ENCODE measurements at regions of chr4 and their contacts with region 1.

Region 1: GRCh38 chr4:17614416-17615299 is at the start of gene MED28:
- DNase-seq: peak; percentile 98
- ATAC-seq: peak; percentile 89
- H3K4me3 Mint-ChIP-seq: peak within 1 kb of the TSS; percentile 98
- H3K27ac Mint-ChIP-seq: peak within 1 kb of the TSS; percentile 97
- H3K4me1 Mint-ChIP-seq: peaks cover 45% of the 10 kb centered on the region
- H3K27me3 Mint-ChIP-seq: no peaks in the 10 kb centered on the region
- total RNA-seq, gene MED28: 43.0 to 58.0 TPM

Region 2: GRCh38 chr4:17511950-17512795 is 102.5 kb before region 1 on chr4 and contains the start of gene QDPR:
- CTCF ChIA-PET with region 1: interaction called, 3 read pairs
- POLR2A ChIA-PET with region 1: no interaction called
- intact Hi-C with region 1: loop called in 1 of 2 experiments (anchors 1 kb)
- DNase-seq: peak; percentile 88
- ATAC-seq: peak; percentile 95
- H3K4me3 Mint-ChIP-seq: peak within 1 kb of the TSS; percentile 78
- H3K27ac Mint-ChIP-seq: peak within 1 kb of the TSS; percentile 85
- H3K4me1 Mint-ChIP-seq: peaks cover 23% of the 10 kb centered on the region
- H3K27me3 Mint-ChIP-seq: no peaks in the 10 kb centered on the region
- total RNA-seq, gene QDPR: 34.5 to 34.6 TPM

Region 3: GRCh38 chr4:17544205-17544604 is 70.5 kb before region 1 on chr4:
- CTCF ChIA-PET with region 1: interaction called, 8 read pairs
- POLR2A ChIA-PET with region 1: no interaction called
- intact Hi-C with region 1: loop called (anchors 1 to 2 kb)
- DNase-seq: no peak
- ATAC-seq: no peak
- H3K4me3 Mint-ChIP-seq: no peak overlapping the region
- H3K27ac Mint-ChIP-seq: no peak overlapping the region
- H3K4me1 Mint-ChIP-seq: no peaks in the 10 kb centered on the region
- H3K27me3 Mint-ChIP-seq: peaks cover 15% of the 10 kb centered on the region

Region 4: DNA sequence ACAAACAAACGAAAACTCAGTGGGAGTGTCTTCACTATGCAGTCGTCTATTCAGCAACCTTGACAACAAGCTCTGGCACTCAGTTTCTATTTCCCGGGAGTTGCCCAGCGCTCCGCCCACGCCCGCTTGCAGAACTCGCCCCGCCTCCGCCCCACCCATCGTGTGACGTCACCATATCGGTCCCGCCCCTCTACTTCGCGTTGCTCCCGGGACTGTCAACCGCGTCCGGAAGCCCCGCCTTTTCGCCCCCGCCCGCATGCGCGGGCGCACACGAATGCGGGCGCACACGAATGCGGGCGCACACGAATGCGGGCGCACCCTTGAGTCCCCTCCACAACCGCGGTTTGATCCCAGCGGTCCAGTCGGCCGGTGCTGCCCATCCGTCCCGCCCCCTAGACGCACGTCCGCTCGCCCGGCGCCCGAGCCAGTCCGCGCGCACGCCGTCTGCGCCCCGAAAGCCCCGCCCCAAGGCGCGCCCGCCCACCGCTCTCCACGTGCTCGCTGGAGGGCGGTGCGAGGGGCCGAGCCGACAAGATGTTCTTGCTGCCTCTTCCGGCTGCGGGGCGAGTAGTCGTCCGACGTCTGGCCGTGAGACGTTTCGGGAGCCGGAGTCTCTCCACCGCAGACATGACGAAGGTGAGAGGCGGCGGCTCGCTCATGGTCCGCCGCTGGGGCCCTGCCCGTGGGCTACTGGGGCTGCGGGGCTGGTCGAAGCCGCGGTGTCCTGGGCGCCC is 37.6 kb before region 1 on chr4 and contains the start of gene LAP3:
- CTCF ChIA-PET with region 1: interaction called, 7 read pairs
- POLR2A ChIA-PET with region 1: interaction called, 10 read pairs
- intact Hi-C with region 1: loop called (anchors 1 kb)
- DNase-seq: peak; percentile 99
- ATAC-seq: peak; percentile 85
- H3K4me3 Mint-ChIP-seq: peak within 1 kb of the TSS; percentile 91
- H3K27ac Mint-ChIP-seq: peak within 1 kb of the TSS; percentile 94
- H3K4me1 Mint-ChIP-seq: peaks cover 29% of the 10 kb centered on the region
- H3K27me3 Mint-ChIP-seq: no peaks in the 10 kb centered on the region
- total RNA-seq, gene LAP3: 126 to 128 TPM

Region 5: GRCh38 chr4:17630228-17630627 is 15.6 kb after region 1 on chr4:
- CTCF ChIA-PET with region 1: interaction called, 5 read pairs
- POLR2A ChIA-PET with region 1: no interaction called
- intact Hi-C with region 1: loop called in 1 of 2 experiments (anchors 2 kb)
- DNase-seq: no peak
- ATAC-seq: no peak
- H3K4me3 Mint-ChIP-seq: no peak overlapping the region
- H3K27ac Mint-ChIP-seq: no peak overlapping the region
- H3K4me1 Mint-ChIP-seq: no peaks in the 10 kb centered on the region
- H3K27me3 Mint-ChIP-seq: no peaks in the 10 kb centered on the region

Region 6: GRCh38 chr4:17647927-17648326 is 33.3 kb after region 1 on chr4:
- CTCF ChIA-PET with region 1: no interaction called
- POLR2A ChIA-PET with region 1: no interaction called
- intact Hi-C with region 1: no loop called
- DNase-seq: no peak
- ATAC-seq: peak; percentile 23
- H3K4me3 Mint-ChIP-seq: no peak overlapping the region
- H3K27ac Mint-ChIP-seq: no peak overlapping the region
- H3K4me1 Mint-ChIP-seq: peaks cover 9% of the 10 kb centered on the region
- H3K27me3 Mint-ChIP-seq: no peaks in the 10 kb centered on the region

Region 7: GRCh38 chr4:17797808-17798207 is 183.2 kb after region 1 on chr4:
- CTCF ChIA-PET with region 1: no interaction called
- POLR2A ChIA-PET with region 1: no interaction called
- intact Hi-C with region 1: no loop called
- DNase-seq: no peak
- ATAC-seq: peak; percentile 47
- H3K4me3 Mint-ChIP-seq: no peak overlapping the region
- H3K27ac Mint-ChIP-seq: no peak overlapping the region
- H3K4me1 Mint-ChIP-seq: peaks cover 5% of the 10 kb centered on the region
- H3K27me3 Mint-ChIP-seq: no peaks in the 10 kb centered on the region

Region 8: GRCh38 chr4:18021722-18022571 is 407.3 kb after region 1 on chr4 and contains the start of gene LCORL:
- CTCF ChIA-PET with region 1: no interaction called
- POLR2A ChIA-PET with region 1: no interaction called
- intact Hi-C with region 1: loop called in 1 of 2 experiments (anchors 1 kb)
- DNase-seq: peak; percentile 91
- ATAC-seq: peak; percentile 88
- H3K4me3 Mint-ChIP-seq: peak within 1 kb of the TSS; percentile 98
- H3K27ac Mint-ChIP-seq: peak within 1 kb of the TSS; percentile 91
- H3K4me1 Mint-ChIP-seq: peaks cover 13% of the 10 kb centered on the region
- H3K27me3 Mint-ChIP-seq: peaks cover 25% of the 10 kb centered on the region
- total RNA-seq, gene LCORL: 6.7 to 8.0 TPM

Measured in activated CD4-positive, alpha-beta T cell treated with anti-CD3 and anti-CD28 coated beads for 36 hours (primary cell).